ENCODE measurements at regions of chr13 and their contacts with region 1.

Region 1: GRCh38 chr13:75549262-75550158 is at the start of gene UCHL3:
- DNase-seq: peak; percentile 98
- ATAC-seq: peak; percentile 98
- total RNA-seq, gene UCHL3: 21.2 TPM

Region 2: DNA sequence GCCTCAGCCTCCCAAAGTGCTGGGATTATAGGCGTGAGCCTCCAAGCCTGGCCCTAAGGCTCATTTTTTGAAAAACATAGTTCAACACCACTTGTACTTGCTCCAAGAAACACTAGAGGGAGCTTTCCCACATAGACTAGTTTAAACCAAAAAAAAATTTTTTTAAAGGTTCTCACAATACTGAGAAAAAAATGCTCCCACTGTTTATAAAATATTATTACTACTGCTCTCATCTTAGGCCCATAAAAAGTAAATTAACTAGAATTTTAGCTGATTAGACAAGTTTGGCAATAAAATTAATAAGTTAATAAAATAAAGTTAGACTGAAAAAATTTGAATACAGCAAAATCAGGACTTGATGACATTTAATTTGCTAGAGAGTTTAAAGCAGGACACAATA is 177.0 kb before region 1 on chr13:
- intact Hi-C with region 1: loop called (anchors 2 kb)
- DNase-seq: no peak
- ATAC-seq: peak; percentile 53

Region 3: DNA sequence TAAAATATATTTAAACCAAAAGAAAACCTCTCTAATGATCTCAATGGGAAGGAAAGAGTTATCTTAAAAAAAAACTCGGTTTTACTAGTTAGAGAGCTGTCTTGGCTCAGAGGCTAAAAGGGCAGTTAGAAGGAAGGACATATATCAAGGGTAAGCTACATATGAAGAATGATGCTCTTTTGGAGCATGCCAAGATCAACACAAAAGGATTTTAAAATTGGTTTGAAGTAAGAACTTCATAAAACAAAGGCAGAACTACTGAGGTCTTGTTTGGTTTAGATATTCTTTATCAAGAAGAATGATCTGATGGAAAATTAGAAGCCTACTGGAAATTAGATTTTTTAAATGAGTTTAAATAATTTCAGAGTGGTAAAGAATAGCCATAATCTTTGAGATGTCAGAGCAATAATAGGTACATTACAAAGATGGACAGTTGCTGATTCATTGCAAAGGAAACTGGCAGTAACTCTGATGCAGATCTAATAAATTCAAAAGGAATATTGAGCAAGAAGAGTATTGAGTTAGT is 47.2 kb after region 1 on chr13:
- intact Hi-C with region 1: no loop called
- DNase-seq: no peak
- ATAC-seq: no peak

Measured in Right ventricle myocardium inferior (tissue), 1 donor.